Dorsolateral prefrontal cortex (tissue), 120 donors: ENCODE measurements at regions of chr14 and their contacts with region 1.

Region 1: GRCh38 chr14:24013654-24014514 is 25.2 kb downstream of the DHRS4L2 start:
- DNase-seq: peak in 2 of 10 donors; percentile 41 to 47
- H3K4me3 ChIP-seq: peak overlapping the region in 20 of 59 donors; percentile 0 to 44 (median 22)
- H3K27ac ChIP-seq: peak overlapping the region in 4 of 59 donors; percentile 9 to 45 (median 14)
- H3K27me3 ChIP-seq: no peaks in the 10 kb centered on the region
- CTCF ChIP-seq: peak; percentile 64 to 98 (median 91)

Region 2: DNA sequence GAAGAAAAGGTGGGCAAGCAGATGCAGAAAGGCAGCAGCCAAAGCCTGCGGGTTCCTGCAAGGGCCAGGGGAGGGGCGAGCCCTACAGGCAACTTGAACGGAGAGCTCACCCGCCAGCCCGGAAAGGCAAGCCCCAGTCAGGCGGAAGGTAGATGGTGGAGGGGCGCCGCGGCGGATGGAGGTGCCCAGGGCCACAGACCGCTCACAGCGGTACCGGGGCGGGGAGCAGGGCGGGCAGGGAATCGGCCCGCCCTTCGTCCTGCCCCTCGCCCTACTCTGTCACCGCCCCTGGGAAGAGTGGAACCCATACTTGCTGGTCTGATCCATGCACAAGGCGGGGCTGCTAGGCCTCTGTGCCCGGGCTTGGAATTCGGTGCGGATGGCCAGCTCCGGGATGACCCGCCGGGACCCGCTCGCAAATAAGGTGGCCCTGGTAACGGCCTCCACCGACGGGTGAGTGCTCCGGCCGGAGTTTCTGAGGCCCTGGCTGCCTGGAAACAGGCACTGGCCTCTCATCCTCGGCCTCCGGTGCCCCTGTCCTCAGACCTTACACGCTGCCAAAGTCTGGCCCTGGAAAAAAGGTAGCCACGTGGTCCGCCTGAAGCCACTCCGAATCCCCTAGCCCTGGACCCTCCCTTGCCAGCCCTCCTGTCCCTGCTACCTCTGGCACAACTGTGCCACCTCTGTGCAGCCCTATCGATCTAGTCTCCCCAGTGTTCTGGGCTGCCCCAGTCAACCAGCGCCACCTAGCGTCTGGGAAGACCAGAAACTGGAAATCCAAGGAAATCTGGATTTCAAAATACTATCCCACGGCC is 60.2 kb before region 1 on chr14 and contains the start of gene DHRS4:
- intact Hi-C with region 1: loop called in 1 of 2 experiments (anchors 5 kb)
- DNase-seq: peak; percentile 55 to 89 (median 78)
- H3K4me3 ChIP-seq: peak within 1 kb of the TSS; percentile 37 to 98 (median 85)
- H3K27ac ChIP-seq: peak within 1 kb of the TSS in 58 of 59 donors; percentile 21 to 96 (median 89)
- H3K27me3 ChIP-seq: no peaks in the 10 kb centered on the region
- CTCF ChIP-seq: peak; percentile 42 to 93 (median 86)
- total RNA-seq, gene DHRS4: 6.3 to 22.2 (median 12.8) TPM

Region 3: GRCh38 chr14:24036169-24036962 is 22.5 kb after region 1 on chr14:
- intact Hi-C with region 1: loop called in 1 of 2 experiments (anchors 2 kb)
- DNase-seq: peak in 9 of 10 donors; percentile 59 to 86 (median 70)
- H3K4me3 ChIP-seq: peak overlapping the region; percentile 52 to 83 (median 70)
- H3K27ac ChIP-seq: peak overlapping the region in 58 of 59 donors; percentile 56 to 95 (median 87)
- H3K27me3 ChIP-seq: no peaks in the 10 kb centered on the region
- CTCF ChIP-seq: peak; percentile 52 to 81 (median 72)

Region 4: DNA sequence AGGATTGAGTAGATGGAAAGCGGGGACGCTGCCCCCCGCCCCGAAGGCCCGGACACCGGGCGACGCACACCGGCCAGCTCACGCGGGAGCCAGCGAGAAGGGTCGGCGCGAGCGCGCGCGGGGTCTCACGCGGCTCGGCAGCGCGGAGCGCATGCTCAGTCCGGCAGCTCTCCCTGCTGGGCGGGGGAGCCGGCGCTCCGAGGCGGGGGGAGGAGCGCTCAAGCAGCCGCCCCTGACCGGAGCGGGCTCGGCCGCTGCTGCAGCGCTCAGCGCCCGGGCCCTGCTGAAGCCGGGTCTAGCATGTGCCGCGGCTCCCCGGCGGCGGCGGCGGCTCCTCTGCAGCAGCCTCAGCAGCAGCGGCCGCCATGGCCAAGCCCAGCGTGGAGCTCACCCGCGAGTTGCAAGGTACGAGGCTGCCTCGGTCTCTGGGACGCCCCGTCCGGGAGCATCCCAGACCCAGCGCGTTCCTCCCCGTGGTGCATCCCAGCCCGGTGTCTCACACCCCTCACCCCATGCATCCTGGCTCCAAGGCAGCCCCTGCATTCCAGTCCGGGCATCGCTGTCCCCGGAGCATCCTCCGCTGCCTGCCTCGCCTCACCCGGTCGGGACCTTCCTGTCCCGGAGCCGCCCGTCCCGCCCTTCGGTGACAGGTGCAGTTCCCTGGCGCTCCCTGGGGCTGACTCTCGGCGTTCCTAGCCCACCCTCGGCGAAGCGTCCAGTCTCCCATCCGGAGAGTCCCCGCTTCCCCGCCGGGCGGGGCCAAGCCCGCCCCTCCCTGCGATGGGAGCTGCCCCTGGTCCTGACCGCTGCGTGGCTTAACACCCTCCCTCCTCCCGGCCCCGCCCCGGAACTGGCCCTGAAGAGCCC is 38.1 kb after region 1 on chr14 and contains the start of gene CARMIL3:
- intact Hi-C with region 1: loop called in 1 of 2 experiments (anchors 5 kb)
- DNase-seq: peak in 9 of 10 donors; percentile 50 to 87 (median 72)
- H3K4me3 ChIP-seq: peak within 1 kb of the TSS; percentile 56 to 91 (median 78)
- H3K27ac ChIP-seq: peak within 1 kb of the TSS in 57 of 59 donors; percentile 3 to 97 (median 82)
- H3K27me3 ChIP-seq: no peaks in the 10 kb centered on the region
- CTCF ChIP-seq: peak in 21 of 56 donors; percentile 8 to 44 (median 22)
- total RNA-seq, gene CARMIL3: 6.6 to 22.8 (median 11.2) TPM

Region 5: DNA sequence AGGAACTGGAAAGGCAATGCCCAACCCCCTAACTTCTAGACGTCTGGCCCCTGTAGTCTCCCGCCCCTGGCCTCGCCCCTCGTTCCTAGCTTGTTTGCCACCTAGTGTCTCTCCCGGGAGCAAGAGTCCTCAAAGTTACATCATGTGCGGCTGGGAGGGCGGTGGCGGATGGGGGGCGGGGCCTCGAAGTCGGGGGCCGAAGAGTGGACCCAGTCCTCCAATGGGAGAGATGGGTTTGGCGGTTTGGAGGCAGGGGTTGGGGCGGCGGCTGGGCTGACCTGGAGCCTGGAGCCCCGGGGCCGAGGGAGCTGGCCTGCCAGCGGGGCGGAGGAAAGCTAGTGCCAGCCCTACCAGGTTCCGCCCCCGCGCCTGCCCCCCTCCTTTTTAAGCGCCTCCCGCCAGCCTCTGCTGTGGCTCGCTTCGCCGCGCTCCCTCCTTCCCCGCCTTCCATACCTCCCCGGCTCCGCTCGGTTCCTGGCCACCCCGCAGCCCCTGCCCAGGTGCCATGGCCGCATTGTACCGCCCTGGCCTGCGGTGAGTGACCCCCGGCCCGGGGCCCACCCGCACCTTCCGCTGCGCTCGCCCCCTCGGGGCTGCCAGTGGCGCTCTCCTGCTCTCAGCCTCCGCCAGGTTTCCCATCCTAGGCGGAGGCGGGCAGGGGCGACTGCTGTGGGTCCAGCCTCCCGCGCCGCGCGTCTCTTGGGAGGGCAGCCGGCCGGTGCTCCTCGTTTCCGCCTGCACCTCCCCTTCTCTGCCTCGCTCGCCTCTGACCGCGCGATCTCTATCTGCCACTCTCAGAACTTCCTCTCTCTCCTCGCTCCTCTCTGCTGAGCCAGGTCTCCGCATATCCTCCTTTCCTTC is 80.2 kb after region 1 on chr14 and contains the start of gene PCK2:
- intact Hi-C with region 1: loop called (anchors 5 kb)
- DNase-seq: peak; percentile 54 to 88 (median 76)
- H3K4me3 ChIP-seq: peak within 1 kb of the TSS; percentile 60 to 98 (median 82)
- H3K27ac ChIP-seq: peak within 1 kb of the TSS in 58 of 59 donors; percentile 31 to 96 (median 85)
- H3K27me3 ChIP-seq: no peaks in the 10 kb centered on the region
- CTCF ChIP-seq: peak in 17 of 56 donors; percentile 4 to 36 (median 18)
- total RNA-seq, gene PCK2: 2.6 to 11.6 (median 6.5) TPM

Region 6: GRCh38 chr14:24108336-24108874 is 94.5 kb after region 1 on chr14:
- intact Hi-C with region 1: loop called in 1 of 2 experiments (anchors 5 kb)
- DNase-seq: peak in 1 of 10 donors; percentile 8
- H3K4me3 ChIP-seq: peak overlapping the region in 3 of 59 donors; percentile 11 to 24 (median 23)
- H3K27ac ChIP-seq: peak overlapping the region in 8 of 59 donors; percentile 6 to 54 (median 34)
- H3K27me3 ChIP-seq: no peaks in the 10 kb centered on the region
- CTCF ChIP-seq: no peak